Common myeloid progenitor, CD34-positive (primary cell): ENCODE measurements at regions of chr16 and their contacts with region 1.

Region 1: DNA sequence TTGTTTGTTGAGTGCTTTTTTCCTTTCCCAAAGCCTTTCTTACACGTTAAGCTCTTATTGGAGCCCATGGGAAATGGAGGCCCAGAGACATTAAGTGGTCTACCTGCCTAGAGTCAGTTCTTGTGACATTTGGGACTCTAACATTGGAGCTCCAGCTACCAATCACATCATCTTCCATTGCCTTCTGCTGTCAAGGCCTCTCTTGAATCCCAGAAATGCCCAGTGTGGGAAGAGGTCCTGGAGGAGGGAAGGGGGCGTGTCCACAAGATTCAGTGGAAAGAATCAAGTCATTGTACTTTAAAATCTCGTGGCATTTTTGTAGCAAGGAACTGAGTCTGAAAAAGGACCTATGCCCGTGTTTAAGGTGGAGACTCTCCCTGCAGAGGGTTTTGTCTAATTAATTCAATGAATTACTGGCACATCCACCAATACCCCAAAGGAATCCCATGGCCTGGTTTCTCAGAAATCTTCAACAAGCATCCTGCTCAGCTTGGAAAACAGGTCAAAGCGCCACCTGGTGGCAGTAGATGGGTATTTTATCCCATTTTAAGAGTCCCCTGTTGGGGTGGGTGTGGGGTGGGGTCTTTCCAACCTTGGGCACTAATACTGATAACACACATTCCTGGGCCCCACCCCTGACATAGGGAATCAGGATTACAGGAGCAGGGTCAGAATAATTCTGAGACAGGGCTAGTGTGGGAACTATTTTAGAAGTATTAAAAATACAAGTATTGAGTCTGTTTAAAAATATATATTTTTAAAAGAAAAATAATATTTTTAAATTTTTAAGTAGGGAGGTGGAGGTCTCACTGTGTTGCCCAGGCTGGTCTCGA is 24.6 kb downstream of the GPT2 start:
- DNase-seq: peak; percentile 65 to 80 (median 73)
- H3K4me3 ChIP-seq: no peak overlapping the region
- H3K27ac ChIP-seq: no peak overlapping the region
- H3K4me1 ChIP-seq: no peaks in the 10 kb centered on the region
- H3K27me3 ChIP-seq: no peaks in the 10 kb centered on the region

Region 2: DNA sequence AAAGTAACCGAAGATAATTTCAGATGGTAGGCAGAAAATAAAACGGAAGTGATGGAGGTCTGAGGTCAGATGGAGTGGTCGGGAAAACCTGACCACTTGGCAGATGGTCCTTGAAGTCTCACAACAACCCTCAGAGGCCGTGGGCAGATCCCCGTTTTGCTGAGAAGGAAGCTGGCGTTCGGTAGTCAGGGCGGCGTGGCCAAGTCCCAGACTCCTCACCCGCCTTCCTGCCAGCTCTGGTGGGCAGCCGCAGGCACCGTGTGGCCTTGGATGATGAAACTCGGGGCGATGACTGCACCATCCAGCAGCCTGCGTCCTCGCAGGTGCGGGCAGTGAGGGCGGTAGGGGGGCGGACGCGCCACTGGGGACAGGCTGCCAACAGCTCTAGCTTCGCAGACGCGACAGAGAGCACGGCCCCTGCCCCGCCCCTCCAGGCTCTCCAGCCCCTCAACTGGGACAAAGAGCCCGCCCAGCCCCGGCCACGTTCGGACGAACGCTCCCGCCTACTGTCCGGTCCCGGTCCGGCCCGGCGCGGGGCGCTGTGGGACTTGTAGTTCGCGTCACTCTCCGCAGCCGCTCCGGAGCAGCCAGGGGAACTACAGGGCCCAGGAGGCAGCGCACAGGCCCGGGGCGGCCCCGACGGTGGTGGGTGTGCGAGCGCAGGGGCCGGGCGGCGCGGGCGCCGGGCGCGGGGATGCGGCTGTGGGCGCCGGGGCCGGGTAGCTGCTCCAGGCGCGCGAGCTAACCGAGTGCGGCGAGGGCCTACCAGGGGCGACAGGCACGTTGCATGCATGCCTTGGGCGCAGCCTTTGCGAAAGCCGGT is 24.9 kb before region 1 on chr16 and contains the start of gene GPT2:
- CTCF ChIA-PET with region 1: interaction called, 11 read pairs
- POLR2A ChIA-PET with region 1: no interaction called
- DNase-seq: peak; percentile 84 to 96 (median 96)
- H3K4me3 ChIP-seq: peak within 1 kb of the TSS; percentile 57 to 87 (median 78)
- H3K27ac ChIP-seq: peak within 1 kb of the TSS in 1 of 2 experiments; percentile 59
- H3K4me1 ChIP-seq: peaks cover 0 to 49% (median 19%) of the 10 kb centered on the region in 4 experiments
- H3K27me3 ChIP-seq: peaks cover 0 to 14% (median 0%) of the 10 kb centered on the region in 5 experiments